Aorta (tissue), 5 donors: ENCODE measurements at regions of chr13 and their contacts with region 1.

Region 1: GRCh38 chr13:29472332-29472961 is 123.0 kb downstream of the SLC7A1 start:
- DNase-seq: peak in 1 of 2 donors; percentile 62
- ATAC-seq: no peak
- H3K4me3 ChIP-seq: no peak overlapping the region
- H3K27ac ChIP-seq: no peak overlapping the region
- H3K4me1 ChIP-seq: no peaks in the 10 kb centered on the region
- H3K27me3 ChIP-seq: no peaks in the 10 kb centered on the region

Region 2: DNA sequence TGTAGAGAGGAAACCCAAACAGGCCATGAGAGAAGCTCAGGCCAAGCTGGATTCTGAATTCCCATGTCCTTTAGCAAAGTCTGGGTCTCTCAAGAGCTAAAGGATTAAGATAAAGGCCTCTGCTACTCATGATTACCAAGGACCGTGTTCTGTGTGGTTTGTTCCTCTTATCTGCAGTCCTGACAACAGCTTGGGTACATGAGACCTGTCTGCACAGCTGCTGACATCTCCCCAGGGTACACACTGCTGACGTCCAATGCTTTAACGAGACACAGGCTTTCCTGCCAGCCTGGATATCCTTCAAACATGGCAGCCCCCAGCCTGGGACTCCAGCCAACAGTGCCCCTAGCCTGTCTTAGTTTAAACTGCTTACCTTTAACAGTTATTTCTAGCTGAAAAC is 88.0 kb before region 1 on chr13:
- intact Hi-C with region 1: no loop called
- DNase-seq: no peak
- ATAC-seq: no peak
- H3K4me3 ChIP-seq: no peak overlapping the region
- H3K27ac ChIP-seq: no peak overlapping the region
- H3K4me1 ChIP-seq: no peaks in the 10 kb centered on the region
- H3K27me3 ChIP-seq: no peaks in the 10 kb centered on the region

Region 3: DNA sequence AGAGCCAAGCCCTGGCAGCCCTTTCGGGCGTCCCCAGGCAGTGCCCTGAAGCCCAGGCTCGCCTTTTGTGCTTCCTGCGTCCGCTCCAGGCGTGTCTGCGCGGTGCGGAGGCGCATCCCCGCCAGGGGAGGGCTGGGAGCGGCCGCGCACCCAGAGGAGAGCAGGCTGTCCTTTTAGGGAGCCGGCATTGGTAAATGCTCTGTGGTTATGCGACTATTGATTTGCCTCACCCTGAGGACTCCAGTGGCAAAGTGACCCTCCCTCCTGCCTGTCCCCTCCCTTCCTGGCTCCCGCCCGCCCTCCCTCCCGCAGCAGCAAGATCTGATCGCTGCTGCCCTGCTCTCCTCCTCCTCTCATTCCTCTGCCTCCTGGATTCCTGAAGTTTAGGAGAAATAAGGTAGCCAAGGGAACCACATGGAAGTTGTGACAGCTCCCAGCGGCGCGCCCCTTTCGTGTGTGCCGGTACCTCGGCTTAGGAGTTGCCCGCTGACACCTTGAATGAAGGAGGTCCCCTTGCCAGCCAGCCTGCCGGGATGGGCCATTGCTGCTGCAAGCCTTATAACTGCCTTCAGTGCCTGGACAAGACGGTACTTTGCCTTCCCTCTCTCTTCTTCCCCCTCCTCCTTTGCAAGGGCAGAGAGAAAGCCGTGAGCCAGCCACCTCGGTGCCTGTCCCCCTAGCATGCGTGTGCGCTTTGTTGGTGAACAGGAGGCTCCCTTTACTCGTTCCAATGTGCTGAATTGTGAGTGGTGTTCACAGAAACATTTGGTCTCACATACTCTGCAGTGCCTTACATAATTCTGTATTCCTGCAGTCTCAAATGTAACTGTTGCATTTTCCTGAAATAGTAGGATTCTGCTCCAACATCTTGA is 43.9 kb before region 1 on chr13:
- intact Hi-C with region 1: loop called in 1 of 2 experiments (anchors 5 kb)
- DNase-seq: peak; percentile 53 to 78
- ATAC-seq: peak; percentile 75
- H3K4me3 ChIP-seq: peak overlapping the region; percentile 5 to 41
- H3K27ac ChIP-seq: peak overlapping the region in 1 of 2 donors; percentile 52
- H3K4me1 ChIP-seq: peaks cover 0 to 1% of the 10 kb centered on the region in 2 donors
- H3K27me3 ChIP-seq: no peaks in the 10 kb centered on the region